ENCODE measurements at regions of chr5 and their contacts with region 1.

Region 1: DNA sequence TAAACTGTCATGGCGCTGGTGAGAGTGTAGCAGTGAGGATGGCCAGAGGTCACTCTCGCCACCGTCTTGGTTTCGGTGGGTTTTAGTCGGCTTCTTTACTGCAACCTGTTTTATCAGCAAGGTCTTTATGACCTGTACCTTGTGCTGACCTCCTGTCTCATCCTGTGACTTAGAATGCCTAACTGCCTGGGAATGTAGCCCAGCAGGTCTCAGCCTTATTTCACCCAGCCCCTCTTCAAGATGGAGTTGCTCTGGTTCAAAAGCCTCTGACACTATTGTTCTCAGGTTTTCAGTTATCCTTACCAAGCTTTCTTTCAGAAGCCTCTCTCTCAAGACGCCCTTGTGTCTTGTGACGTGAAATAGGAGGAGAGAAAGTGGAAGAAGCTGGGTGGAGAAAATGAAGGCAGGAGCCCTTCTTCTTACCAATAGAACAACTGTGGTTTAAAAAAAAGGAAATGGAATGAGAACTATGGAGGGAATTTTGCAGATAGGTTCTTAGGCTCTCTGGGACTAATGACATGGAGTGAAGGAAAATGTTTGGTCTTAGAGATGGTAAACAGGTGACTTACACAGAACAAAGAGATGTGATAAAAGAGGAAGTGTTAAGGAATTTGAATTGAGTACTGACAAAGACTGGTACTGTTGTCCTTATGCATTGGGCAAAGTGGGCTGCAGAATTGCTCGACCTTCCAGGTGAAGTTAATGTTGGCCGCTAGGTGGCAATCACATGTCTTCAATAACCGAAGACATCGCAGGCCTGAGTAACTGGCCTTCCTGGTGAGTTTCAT is 133.3 kb upstream of the RAI14 start:
- DNase-seq: peak; percentile 77 to 82
- H3K4me3 ChIP-seq: no peak overlapping the region
- H3K27ac ChIP-seq: peak overlapping the region in 1 of 2 donors; percentile 68
- H3K4me1 ChIP-seq: peaks cover 0 to 67% (median 12%) of the 10 kb centered on the region in 4 donors
- H3K27me3 ChIP-seq: no peaks in the 10 kb centered on the region
- CTCF ChIP-seq: peak; percentile 69 to 81

Region 2: GRCh38 chr5:32780508-32780919 is 1742.3 kb before region 1 on chr5:
- intact Hi-C with region 1: no loop called
- DNase-seq: no peak
- H3K4me3 ChIP-seq: peak overlapping the region in 1 of 2 donors; percentile 18
- H3K27ac ChIP-seq: peak overlapping the region; percentile 46 to 63
- H3K4me1 ChIP-seq: peaks cover 0 to 50% (median 6%) of the 10 kb centered on the region in 4 donors
- H3K27me3 ChIP-seq: no peaks in the 10 kb centered on the region
- CTCF ChIP-seq: no peak

Region 3: DNA sequence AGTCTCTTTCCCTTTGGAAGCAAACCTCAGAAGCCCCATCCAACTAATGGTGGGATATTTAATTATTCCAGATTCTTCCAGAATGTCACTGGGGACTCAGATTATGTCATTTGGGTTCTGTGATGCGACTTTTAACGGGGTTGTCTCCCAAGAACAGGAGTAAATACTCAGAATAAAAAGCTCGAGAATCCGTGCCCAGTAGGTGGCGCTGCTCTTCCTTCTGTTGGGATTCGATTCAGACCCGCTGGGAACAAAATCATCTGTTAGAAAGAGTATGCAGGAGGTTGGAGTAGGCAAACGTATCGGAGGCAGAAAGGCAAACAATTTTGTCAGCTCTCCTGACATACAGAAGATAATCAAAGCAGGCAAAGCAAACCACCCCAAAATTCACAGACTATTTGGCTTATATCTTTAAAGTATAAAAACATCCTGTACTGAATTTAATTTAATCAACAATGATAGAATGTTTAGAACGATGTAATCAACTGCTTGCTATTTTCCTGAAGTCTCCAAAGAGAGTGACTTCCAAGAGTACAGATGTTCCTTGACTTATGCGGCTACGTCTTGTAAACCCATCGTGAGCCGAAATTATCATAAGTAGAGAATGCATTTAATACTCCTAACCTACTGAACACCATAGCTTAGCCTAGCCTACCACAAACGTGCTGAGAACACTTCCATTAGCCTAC is 36.5 kb before region 1 on chr5:
- intact Hi-C with region 1: loop called (anchors 5 kb)
- DNase-seq: peak; percentile 81 to 89
- H3K4me3 ChIP-seq: no peak overlapping the region
- H3K27ac ChIP-seq: peak overlapping the region; percentile 65
- H3K4me1 ChIP-seq: peaks cover 0 to 49% (median 27%) of the 10 kb centered on the region in 4 donors
- H3K27me3 ChIP-seq: no peaks in the 10 kb centered on the region
- CTCF ChIP-seq: peak; percentile 75 to 83

Region 4: GRCh38 chr5:34686762-34687268 is 164.0 kb after region 1 on chr5:
- intact Hi-C with region 1: loop called (anchors 10 kb)
- DNase-seq: peak; percentile 53 to 85
- H3K4me3 ChIP-seq: peak overlapping the region in 1 of 2 donors; percentile 5
- H3K27ac ChIP-seq: peak overlapping the region; percentile 13 to 68
- H3K4me1 ChIP-seq: peaks cover 0 to 75% (median 22%) of the 10 kb centered on the region in 4 donors
- H3K27me3 ChIP-seq: no peaks in the 10 kb centered on the region
- CTCF ChIP-seq: no peak

Measured in tibial artery (tissue), 4 donors.